K562 (cell line): ENCODE measurements at regions of chr17 and their contacts with region 1.

Region 1: DNA sequence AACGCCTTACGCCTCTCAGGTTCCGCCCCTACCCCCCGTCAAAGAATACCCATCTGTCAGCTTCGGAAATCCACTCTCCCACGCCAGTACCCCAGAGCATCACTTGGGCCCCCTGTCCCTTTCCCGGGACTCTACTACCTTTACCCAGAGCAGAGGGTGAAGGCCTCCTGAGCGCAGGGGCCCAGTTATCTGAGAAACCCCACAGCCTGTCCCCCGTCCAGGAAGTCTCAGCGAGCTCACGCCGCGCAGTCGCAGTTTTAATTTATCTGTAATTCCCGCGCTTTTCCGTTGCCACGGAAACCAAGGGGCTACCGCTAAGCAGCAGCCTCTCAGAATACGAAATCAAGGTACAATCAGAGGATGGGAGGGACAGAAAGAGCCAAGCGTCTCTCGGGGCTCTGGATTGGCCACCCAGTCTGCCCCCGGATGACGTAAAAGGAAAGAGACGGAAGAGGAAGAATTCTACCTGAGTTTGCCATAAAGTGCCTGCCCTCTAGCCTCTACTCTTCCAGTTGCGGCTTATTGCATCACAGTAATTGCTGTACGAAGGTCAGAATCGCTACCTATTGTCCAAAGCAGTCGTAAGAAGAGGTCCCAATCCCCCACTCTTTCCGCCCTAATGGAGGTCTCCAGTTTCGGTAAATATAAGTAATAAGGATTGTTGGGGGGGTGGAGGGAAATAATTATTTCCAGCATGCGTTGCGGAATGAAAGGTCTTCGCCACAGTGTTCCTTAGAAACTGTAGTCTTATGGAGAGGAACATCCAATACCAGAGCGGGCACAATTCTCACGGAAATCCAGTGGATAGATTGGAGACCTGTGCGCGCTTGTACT is at the start of gene BRCA1:
- DNase-seq: peak; percentile 94 to 99 (median 96)
- ATAC-seq: peak; percentile 96
- H3K4me3 ChIP-seq: peak within 1 kb of the TSS; percentile 74
- H3K27ac ChIP-seq: peak within 1 kb of the TSS; percentile 98
- H3K4me1 ChIP-seq: peaks cover 4 to 13% of the 10 kb centered on the region in 2 experiments; a peak in 4 of 5 replicates
- H3K27me3 ChIP-seq: no peaks in the 10 kb centered on the region
- CTCF ChIP-seq: no peak
- EP300 ChIP-seq: peak; percentile 71
- POLR2A ChIP-seq: peak; percentile 89
- RAD21 ChIP-seq: no peak
- polyA plus RNA-seq, gene BRCA1: 25.9 to 35.6 TPM

Region 2: GRCh38 chr17:42969001-42969581 is 156.3 kb before region 1 on chr17:
- CTCF ChIA-PET with region 1: no interaction called
- POLR2A ChIA-PET with region 1: no interaction called
- in situ Hi-C with region 1: no loop called
- intact Hi-C with region 1: no loop called
- DNase-seq: peak in 2 of 4 experiments; percentile 14 to 46
- ATAC-seq: peak; percentile 30
- H3K4me3 ChIP-seq: no peak overlapping the region
- H3K27ac ChIP-seq: peak overlapping the region; percentile 55; the same call in 2 of the 3 replicates
- H3K4me1 ChIP-seq: peaks cover 0 to 7% of the 10 kb centered on the region in 2 experiments; a peak in 3 of 5 replicates
- H3K27me3 ChIP-seq: no peaks in the 10 kb centered on the region
- CTCF ChIP-seq: no peak
- EP300 ChIP-seq: no peak
- POLR2A ChIP-seq: no peak
- RAD21 ChIP-seq: no peak

Region 3: DNA sequence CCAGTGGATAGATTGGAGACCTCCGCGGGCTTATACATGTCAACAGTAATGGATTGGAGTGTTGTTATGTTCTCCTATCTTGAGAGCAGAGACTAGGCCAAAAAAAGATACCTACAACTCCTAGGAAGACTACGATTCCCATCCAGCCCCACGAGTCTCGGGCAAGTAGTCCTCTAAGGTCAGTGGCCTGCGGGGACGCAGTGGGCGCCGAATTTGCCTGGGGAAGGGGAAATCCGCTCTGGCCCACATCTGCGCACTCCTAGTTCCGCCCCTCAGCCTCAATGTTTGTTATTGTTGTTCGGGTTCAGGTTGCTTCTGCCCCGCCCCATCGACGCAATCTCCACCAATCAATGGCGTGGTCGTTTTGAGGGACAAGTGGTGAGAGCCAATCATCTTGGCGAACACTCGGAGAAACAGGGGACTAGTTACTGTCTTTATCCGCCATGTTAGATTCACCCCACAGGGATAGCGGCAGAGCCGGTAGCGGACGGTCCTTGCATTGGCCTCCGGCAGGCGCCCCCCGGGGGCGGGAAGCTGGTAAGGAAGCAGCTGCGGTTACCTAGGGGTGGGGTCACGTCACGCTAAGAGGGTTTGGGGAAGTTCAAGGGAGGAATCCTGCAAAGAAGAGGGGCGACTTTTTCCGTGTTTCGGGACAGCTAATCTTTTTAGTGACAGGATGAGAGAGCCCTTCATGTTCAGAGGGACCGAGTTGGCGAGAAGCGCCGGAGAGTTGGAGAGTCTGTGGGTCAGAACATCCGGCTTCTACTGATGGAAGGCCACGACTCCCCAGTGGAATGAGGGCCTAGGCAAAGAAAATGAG is 45.6 kb after region 1 on chr17 and contains the start of gene NBR1:
- CTCF ChIA-PET with region 1: interaction called, 4 read pairs
- POLR2A ChIA-PET with region 1: interaction called, 11 read pairs
- in situ Hi-C with region 1: no loop called
- intact Hi-C with region 1: loop called (anchors 1 kb)
- DNase-seq: peak; percentile 92 to 99 (median 96)
- ATAC-seq: peak; percentile 92
- H3K4me3 ChIP-seq: peak within 1 kb of the TSS; percentile 84
- H3K27ac ChIP-seq: peak within 1 kb of the TSS; percentile 92
- H3K4me1 ChIP-seq: peaks cover 3 to 8% of the 10 kb centered on the region in 2 experiments; a peak in 3 of 5 replicates
- H3K27me3 ChIP-seq: no peaks in the 10 kb centered on the region
- CTCF ChIP-seq: peak; percentile 53 to 71 (median 64); a peak in 5 of 6 replicates
- EP300 ChIP-seq: peak; percentile 58
- POLR2A ChIP-seq: peak; percentile 85
- RAD21 ChIP-seq: peak in 1 of 2 experiments; percentile 35; a peak in 2 of 4 replicates
- polyA plus RNA-seq, gene NBR1: 4.2 to 7.5 TPM